Heart left ventricle (tissue), 16 donors: ENCODE measurements at regions of chr11 and their contacts with region 1.

Region 1: GRCh38 chr11:123549926-123550917 is 104.2 kb downstream of the SCN3B start:
- DNase-seq: no peak
- ATAC-seq: no peak
- H3K4me3 ChIP-seq: no peak overlapping the region
- H3K27ac ChIP-seq: no peak overlapping the region
- H3K4me1 ChIP-seq: peaks cover 0 to 17% (median 9%) of the 10 kb centered on the region in 12 donors
- H3K27me3 ChIP-seq: no peaks in the 10 kb centered on the region
- CTCF ChIP-seq: no peak
- POLR2A ChIP-seq: no peak

Region 2: DNA sequence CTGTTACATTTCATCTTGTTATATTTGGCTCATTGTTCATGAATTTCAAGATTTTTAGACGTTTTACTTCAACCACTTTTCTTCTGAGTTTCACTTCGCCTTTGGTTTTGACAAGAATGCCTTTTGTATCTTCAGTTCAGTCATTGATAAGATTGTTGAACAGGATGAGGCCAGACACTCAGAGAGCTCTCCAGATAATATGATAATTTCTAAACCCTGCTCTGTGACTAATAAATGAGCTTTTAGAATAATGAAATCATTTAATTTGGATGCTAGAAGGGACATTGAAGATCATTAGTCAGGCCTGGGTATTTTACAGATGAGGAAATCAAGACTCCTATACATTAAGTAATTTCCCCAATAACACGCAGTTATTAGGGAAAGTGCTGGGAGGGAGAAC is 157.4 kb before region 1 on chr11:
- intact Hi-C with region 1: no loop called
- DNase-seq: no peak
- ATAC-seq: no peak
- H3K4me3 ChIP-seq: no peak overlapping the region
- H3K27ac ChIP-seq: no peak overlapping the region
- H3K4me1 ChIP-seq: peaks cover 0 to 12% (median 0%) of the 10 kb centered on the region in 12 donors
- H3K27me3 ChIP-seq: no peaks in the 10 kb centered on the region
- CTCF ChIP-seq: no peak
- POLR2A ChIP-seq: no peak

Region 3: DNA sequence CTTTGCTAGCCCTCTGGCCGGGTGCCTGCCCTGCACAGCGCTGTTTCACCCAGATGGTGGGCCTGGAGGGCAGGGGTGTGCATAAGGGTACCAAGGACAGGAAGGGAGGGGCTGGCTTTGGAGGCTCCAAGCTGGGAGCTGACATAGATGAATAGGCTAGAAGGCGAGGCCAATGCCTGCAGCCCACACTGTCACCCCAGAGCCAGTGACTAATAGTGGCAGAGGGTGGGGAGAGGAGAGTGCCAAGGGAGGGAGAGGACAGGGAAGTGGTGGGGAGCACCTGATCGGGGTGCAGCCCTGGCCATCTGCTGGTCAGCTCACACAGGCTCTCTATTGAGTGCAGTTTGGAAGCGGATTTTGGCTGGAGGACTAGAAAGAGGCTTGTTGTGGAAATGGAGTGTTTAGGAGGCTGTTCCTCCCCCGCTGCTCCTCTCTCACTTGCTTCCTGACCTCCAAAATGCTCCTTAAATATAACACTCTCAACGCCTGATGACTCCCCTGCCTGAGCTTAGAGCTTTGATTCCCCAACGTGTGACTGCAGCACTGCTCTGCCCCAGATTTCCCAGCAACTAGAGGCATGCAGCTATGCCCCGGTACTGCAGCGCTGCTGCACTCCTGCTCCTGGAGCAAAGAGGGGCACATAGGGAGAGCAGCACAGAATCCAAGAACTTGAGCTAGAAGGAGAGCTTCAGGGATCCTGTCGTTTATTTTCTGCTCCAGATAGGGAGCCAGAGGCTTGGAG is 31.0 kb before region 1 on chr11:
- intact Hi-C with region 1: loop called in 7 of 10 experiments (anchors 5 kb)
- DNase-seq: no peak
- ATAC-seq: peak; percentile 16 to 73 (median 64)
- H3K4me3 ChIP-seq: no peak overlapping the region
- H3K27ac ChIP-seq: peak overlapping the region; percentile 24 to 86 (median 62)
- H3K4me1 ChIP-seq: peaks cover 0 to 31% (median 13%) of the 10 kb centered on the region in 12 donors
- H3K27me3 ChIP-seq: no peaks in the 10 kb centered on the region
- CTCF ChIP-seq: no peak
- POLR2A ChIP-seq: no peak